ENCODE measurements at regions of chr12 and their contacts with region 1.

Region 1: DNA sequence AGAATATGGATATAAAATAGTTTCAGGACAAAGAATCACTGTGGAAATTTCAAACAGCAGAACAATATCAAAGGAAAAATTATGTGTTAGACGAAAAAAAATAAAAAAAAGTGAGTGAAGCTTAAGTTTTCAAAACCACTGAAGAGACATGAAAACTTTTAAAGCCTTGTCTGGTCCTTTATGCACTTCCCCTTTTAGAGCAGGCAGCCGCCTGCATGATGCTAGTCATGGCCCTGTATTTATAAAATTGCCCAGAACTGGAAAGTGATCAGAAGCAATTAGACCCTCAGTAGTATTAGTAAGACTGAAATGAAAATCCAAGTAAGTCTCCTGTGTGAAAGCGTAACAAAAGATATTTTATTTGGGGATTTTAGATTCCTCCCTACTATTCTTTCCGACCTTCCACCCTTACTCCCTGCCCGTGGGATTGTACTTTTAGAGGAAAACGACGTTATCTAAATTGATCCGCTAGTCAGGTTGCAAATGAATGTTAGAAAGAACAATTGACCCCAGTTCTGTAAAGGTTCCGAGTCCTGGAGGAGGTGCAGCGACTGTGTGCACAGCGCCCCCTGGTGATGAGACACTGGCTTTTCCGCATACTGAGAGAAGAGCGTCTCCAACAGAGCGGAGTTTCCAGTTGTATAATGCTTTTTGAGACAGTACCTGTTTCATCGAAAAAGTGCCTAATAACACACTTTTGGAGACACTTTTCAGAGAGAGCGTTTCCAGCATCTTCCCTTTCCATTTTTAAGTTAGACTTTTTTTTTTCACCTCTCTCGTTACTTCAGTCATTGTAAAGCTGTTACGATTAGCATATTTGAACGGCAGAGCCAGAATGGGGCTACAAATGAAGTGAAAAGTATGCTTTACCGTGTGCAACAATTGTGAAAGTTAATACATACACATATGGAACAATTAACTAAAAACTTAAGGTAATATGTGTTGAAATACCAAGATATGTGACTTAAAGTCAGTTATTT is 12.4 kb downstream of the MGST1 start:
- H3K4me3 Mint-ChIP-seq: peak overlapping the region; percentile 18
- H3K27ac Mint-ChIP-seq: peak overlapping the region; percentile 69
- H3K4me1 Mint-ChIP-seq: peaks cover 32% of the 10 kb centered on the region
- H3K27me3 Mint-ChIP-seq: no peaks in the 10 kb centered on the region

Region 2: DNA sequence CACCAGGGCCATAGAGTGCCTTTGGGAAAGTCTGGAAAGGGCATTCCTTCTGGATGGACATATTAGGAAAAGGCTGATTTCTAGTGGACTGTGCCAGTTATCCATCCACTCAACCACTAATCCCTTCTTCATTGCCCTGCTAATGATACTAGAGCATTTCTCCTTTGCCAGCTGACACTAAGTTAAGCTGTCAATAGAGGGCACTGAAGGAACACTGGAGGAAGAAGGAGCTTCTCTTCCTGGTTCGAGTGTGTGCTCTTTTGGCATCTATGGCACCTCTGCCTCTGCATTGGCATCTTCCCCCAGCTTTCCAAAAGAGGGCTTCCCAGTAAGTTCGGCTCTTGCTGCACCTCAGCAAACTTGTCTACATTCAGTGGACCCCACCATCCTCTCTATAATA is 283.2 kb before region 1 on chr12:
- intact Hi-C with region 1: loop called (anchors 1 kb)
- H3K4me3 Mint-ChIP-seq: no peak overlapping the region
- H3K27ac Mint-ChIP-seq: no peak overlapping the region
- H3K4me1 Mint-ChIP-seq: no peaks in the 10 kb centered on the region
- H3K27me3 Mint-ChIP-seq: no peaks in the 10 kb centered on the region

Region 3: DNA sequence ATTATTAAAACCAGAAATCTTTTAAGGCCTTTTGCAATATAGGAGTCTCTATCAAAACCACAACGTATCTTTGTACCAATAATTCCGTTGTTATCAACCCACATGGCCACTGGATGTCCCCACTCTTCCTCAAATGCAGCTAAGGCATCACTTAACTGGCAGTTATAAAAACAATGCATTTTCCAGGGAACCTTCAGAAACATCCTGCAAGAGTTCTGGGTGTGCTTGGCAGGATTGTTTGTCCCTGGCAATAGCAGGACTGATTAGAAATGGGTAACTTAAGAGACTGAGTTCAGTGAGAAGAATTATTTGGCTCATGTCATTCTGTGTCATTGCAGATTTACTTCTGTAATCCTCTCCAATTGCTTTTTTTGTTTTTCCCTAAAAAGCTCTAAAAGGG is 194.3 kb before region 1 on chr12:
- intact Hi-C with region 1: loop called (anchors 1 kb)
- H3K4me3 Mint-ChIP-seq: no peak overlapping the region
- H3K27ac Mint-ChIP-seq: no peak overlapping the region
- H3K4me1 Mint-ChIP-seq: peaks cover 5% of the 10 kb centered on the region
- H3K27me3 Mint-ChIP-seq: peaks cover 3% of the 10 kb centered on the region

Region 4: DNA sequence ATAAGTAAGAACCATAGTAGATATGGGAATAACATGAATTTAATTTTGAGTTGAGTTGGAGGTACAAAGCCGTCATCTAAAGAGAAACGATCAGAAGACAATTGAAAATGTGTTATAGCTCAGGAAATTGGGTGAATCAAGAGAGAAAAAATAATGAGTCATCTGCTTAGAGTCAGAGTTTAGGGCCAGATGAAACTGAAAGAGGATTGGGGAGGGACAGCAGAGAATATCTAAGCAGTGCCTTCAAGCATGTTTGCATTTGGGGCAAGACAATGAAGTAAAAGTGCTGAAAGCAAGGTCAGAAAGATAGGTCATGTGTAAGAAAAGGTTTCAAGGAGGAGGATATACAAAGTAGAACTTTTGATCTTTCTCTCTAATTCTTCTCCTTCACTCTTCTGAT is 131.7 kb before region 1 on chr12:
- intact Hi-C with region 1: no loop called
- H3K4me3 Mint-ChIP-seq: no peak overlapping the region
- H3K27ac Mint-ChIP-seq: no peak overlapping the region
- H3K4me1 Mint-ChIP-seq: no peaks in the 10 kb centered on the region
- H3K27me3 Mint-ChIP-seq: no peaks in the 10 kb centered on the region